ENCODE measurements at regions of chr1 and their contacts with region 1.

Region 1: DNA sequence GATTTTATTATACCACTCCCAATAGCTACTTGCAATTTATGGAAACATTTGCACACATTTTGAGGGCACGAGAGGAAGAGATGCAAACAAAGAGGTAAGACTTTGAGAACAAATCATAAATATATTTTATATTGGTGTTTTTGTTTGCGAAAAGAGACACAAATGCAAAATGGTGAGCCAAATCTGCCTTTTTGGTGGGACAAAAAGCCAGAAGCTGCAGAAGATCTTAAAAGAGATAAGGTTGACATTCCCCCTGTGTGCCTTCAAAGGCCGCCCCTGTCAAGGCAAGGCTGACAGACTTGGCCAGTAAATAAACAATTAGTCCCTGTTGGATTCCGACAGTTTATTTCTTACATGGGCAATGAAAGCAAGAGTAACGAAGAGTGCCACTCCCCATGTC is 122.8 kb downstream of the LBR start:
- DNase-seq: no peak
- ATAC-seq: no peak
- H3K4me3 ChIP-seq: no peak overlapping the region
- H3K27ac ChIP-seq: no peak overlapping the region
- H3K4me1 ChIP-seq: no peaks in the 10 kb centered on the region
- H3K27me3 ChIP-seq: no peaks in the 10 kb centered on the region
- CTCF ChIP-seq: no peak
- POLR2A ChIP-seq: no peak
- RAD21 ChIP-seq: no peak

Region 2: GRCh38 chr1:224774378-224774777 is 530.6 kb before region 1 on chr1:
- CTCF ChIA-PET with region 1: no interaction called
- POLR2A ChIA-PET with region 1: no interaction called
- RAD21 ChIA-PET with region 1: no interaction called
- intact Hi-C with region 1: no loop called
- DNase-seq: no peak
- ATAC-seq: peak; percentile 93
- H3K4me3 ChIP-seq: no peak overlapping the region
- H3K27ac ChIP-seq: no peak overlapping the region
- H3K4me1 ChIP-seq: peaks cover 0 to 4% of the 10 kb centered on the region in 2 experiments; a peak in 1 of 4 replicates
- H3K27me3 ChIP-seq: peaks cover 9% of the 10 kb centered on the region; the same call in 1 of the 2 replicates
- CTCF ChIP-seq: peak; percentile 18 to 54 (median 51); a peak in 4 of 6 replicates
- POLR2A ChIP-seq: no peak
- RAD21 ChIP-seq: peak; percentile 37

Region 3: GRCh38 chr1:225318706-225319575 is 13.9 kb after region 1 on chr1:
- CTCF ChIA-PET with region 1: interaction called, 15 read pairs
- POLR2A ChIA-PET with region 1: no interaction called
- RAD21 ChIA-PET with region 1: no interaction called
- intact Hi-C with region 1: no loop called
- DNase-seq: peak; percentile 36
- ATAC-seq: peak; percentile 100
- H3K4me3 ChIP-seq: no peak overlapping the region
- H3K27ac ChIP-seq: no peak overlapping the region
- H3K4me1 ChIP-seq: no peaks in the 10 kb centered on the region; a peak in 1 of 4 replicates
- H3K27me3 ChIP-seq: no peaks in the 10 kb centered on the region
- CTCF ChIP-seq: peak; percentile 66 to 86 (median 85)
- POLR2A ChIP-seq: no peak
- RAD21 ChIP-seq: peak; percentile 80